Mammary epithelial cell (primary cell): ENCODE measurements at regions of chr7 and their contacts with region 1.

Region 1: GRCh38 chr7:100889761-100890634 is 483 bp upstream of the UFSP1 start:
- DNase-seq: peak; percentile 90
- H3K4me3 ChIP-seq: peak overlapping the region; percentile 50 to 79 (median 51)
- H3K27ac ChIP-seq: peak overlapping the region; percentile 29
- H3K4me1 ChIP-seq: peaks cover 36% of the 10 kb centered on the region
- H3K27me3 ChIP-seq: no peaks in the 10 kb centered on the region
- CTCF ChIP-seq: no peak

Region 2: DNA sequence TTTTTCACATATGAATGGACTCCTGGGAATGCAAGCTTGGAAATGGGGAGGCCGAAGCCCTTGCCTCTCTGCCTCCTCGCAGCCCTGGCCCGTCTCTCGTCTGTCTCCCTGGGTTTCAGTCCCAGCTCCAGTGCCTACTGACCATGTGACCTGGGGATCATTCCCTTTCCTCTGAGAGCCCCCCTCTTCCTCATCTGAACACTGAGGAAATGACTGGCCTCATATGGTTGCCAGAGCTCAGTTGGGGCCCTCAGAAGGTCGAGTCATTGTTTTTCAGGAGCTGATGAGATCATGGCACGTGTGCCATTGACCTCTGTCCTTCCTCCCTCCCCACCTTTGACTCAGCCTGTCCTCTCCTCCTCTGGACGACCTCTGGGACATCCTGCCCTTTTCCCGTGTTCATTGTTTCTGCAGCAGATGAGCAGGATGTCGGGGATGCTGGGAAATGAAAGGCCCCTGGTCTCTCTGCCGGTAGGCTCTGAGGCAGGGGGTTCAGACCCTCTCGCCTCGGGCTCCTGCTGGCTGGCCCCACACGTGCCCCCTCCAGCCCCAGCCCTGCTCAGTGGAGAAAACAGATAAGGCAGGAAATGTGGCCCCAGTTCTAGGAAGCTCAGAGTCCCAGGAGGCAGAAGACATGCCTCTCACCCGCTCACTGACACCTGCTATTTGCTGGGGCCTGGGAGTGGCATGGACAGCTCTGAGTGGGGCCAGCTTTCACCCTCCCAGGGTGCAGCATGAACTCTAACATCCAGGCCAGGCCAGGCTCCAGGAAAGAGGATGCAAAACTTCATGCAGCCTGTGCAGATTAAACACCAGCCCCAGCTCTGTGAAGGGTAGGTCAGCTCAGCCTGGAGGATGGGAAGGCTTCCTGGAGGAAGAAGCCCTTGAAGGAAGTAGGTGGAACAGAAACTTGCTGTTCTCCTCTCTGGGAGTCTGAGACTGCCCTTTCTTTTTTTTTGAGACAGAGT is 445.4 kb before region 1 on chr7:
- CTCF ChIA-PET with region 1: no interaction called
- dilution Hi-C with region 1: loop called (anchors 10 kb)
- in situ Hi-C with region 1: no loop called
- intact Hi-C with region 1: no loop called
- DNase-seq: no peak
- H3K4me3 ChIP-seq: no peak overlapping the region
- H3K27ac ChIP-seq: no peak overlapping the region
- H3K4me1 ChIP-seq: no peaks in the 10 kb centered on the region
- H3K27me3 ChIP-seq: no peaks in the 10 kb centered on the region
- CTCF ChIP-seq: no peak

Region 3: GRCh38 chr7:100874577-100875355 is 15.2 kb before region 1 on chr7 and contains the start of gene SRRT:
- CTCF ChIA-PET with region 1: no interaction called
- dilution Hi-C with region 1: no loop called
- in situ Hi-C with region 1: no loop called
- intact Hi-C with region 1: loop called (anchors 1 kb)
- DNase-seq: peak; percentile 97
- H3K4me3 ChIP-seq: peak within 1 kb of the TSS; percentile 76 to 92 (median 89)
- H3K27ac ChIP-seq: peak within 1 kb of the TSS; percentile 79
- H3K4me1 ChIP-seq: peaks cover 21% of the 10 kb centered on the region
- H3K27me3 ChIP-seq: no peaks in the 10 kb centered on the region
- CTCF ChIP-seq: peak in 1 of 2 donors; percentile 39
- total RNA-seq, gene SRRT: 29.5 to 127 TPM

Region 4: DNA sequence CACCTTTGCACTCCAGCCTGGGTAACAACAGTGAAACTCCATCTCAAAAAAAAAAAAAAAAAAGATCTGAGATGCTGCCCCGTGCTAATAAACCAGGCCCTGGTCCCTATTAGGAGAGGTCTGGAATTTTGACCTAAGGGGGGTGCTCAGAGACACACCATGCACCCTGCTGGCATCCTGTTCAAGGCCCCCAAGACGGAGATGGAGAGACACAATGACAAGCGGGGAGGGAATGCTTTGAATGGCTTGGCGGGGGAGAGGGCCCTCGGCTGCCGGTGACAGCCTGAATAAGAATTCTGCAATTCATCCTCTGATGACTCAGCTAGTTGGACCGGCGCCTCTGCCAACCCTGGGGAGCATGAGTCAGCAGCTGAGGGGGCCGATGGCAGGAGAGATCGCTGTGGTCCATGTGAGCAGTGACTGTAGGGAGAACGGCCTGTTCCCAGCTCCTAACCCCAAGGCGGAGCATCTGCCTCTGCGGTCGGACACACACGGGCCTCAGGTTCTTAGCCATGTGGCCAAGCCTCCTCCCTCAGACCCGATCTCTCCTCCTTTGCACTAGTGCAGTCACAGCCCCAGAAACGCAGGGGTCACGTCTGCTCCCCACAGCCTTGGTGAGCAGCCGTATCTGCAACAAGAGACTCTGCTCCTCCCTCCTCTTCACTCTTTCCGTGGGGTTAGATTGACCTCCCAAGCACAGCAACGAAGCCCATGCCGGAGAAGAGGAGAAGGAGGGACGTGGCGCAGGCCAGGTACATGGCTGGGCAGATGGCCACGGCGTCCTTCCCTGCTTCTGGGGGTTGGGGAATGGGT is 210.2 kb after region 1 on chr7:
- CTCF ChIA-PET with region 1: no interaction called
- dilution Hi-C with region 1: loop called (anchors 5 kb)
- in situ Hi-C with region 1: no loop called
- intact Hi-C with region 1: no loop called
- DNase-seq: peak; percentile 98
- H3K4me3 ChIP-seq: no peak overlapping the region
- H3K27ac ChIP-seq: peak overlapping the region; percentile 75
- H3K4me1 ChIP-seq: peaks cover 30% of the 10 kb centered on the region
- H3K27me3 ChIP-seq: no peaks in the 10 kb centered on the region
- CTCF ChIP-seq: no peak

Region 5: DNA sequence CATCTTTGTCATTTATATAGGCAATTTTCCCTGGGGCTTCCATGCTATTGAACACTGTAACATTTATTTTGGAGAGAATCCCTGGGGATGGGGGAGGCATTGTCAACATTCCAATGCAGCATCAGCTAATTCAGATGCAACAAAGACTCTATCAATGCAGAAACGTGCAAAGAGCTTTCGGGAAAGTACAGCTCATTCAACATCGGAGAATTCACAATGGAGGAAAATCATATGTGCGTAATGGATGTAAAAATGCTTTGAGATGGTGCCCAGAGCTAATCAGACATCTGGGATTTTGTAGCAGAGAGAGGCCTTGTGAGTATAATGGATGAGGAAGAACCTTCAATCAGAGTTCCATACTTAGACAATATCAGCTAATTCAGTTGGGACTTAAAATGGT is 383.2 kb after region 1 on chr7:
- CTCF ChIA-PET with region 1: no interaction called
- dilution Hi-C with region 1: no loop called
- in situ Hi-C with region 1: loop called (anchors 10 to 25 kb)
- intact Hi-C with region 1: no loop called
- DNase-seq: no peak
- H3K4me3 ChIP-seq: no peak overlapping the region
- H3K27ac ChIP-seq: no peak overlapping the region
- H3K4me1 ChIP-seq: no peaks in the 10 kb centered on the region
- H3K27me3 ChIP-seq: no peaks in the 10 kb centered on the region
- CTCF ChIP-seq: no peak